ENCODE measurements at regions of chr21 and their contacts with region 1.

Region 1: DNA sequence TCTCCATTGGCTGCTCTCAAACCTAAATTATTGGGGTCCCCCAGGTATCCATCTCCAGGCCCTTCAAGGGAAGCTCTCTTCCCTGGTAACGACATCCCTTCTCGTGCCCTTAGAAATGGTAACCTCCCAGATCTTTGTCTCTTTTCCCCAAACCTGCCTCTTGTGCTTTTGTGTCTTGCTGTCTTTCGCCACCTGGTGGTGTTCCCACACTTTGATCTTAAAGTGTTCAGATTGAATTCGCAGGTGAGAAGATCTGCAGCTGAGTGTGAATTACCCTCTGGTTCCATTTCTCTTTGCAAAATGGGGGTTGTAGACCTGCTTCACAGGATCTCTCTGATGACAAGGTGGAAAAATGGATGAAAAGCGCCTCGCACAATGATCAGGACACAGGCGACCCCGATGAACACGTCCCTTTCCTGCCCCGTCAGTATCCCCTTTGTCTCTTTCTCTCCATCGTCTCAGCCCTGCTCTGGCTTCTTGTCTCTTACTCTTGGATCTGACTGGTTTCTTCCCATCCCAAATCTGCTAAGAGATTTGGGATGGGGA is 53.1 kb downstream of the DOP1B start:
- DNase-seq: peak in 7 of 9 donors; percentile 20 to 57 (median 51)
- ATAC-seq: no peak
- H3K4me3 ChIP-seq: no peak overlapping the region
- H3K4me3 Mint-ChIP-seq: no peak overlapping the region
- H3K27ac ChIP-seq: no peak overlapping the region
- H3K27ac Mint-ChIP-seq: peak overlapping the region in 2 of 9 donors; percentile 3 to 38
- H3K4me1 ChIP-seq: no peaks in the 10 kb centered on the region
- H3K4me1 Mint-ChIP-seq: peaks cover 1 to 18% (median 9%) of the 10 kb centered on the region in 7 donors
- H3K27me3 ChIP-seq: no peaks in the 10 kb centered on the region
- H3K27me3 Mint-ChIP-seq: no peaks in the 10 kb centered on the region

Region 2: DNA sequence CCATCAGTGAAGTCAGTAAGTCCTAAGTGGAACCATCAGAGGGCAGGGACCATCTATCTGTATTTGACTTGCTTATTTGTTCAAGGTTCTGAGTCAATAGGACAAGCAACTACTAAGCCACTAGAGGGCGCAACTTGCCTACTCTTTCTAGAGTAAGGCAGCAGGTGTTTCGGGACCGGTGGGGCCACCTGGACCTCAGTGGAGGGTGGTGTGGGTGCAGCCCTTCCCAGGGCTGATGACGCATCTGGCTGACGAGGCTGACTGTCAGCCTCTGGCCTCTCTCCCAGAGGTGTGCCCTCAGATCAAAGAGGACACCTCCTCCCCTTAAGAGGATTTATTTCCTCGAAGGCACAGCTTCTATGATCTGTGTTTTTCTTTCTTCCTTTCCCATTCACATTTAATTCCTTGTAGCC is 68.2 kb before region 1 on chr21:
- CTCF ChIA-PET with region 1: interaction called, 8 read pairs
- POLR2A ChIA-PET with region 1: interaction called, 3 read pairs
- intact Hi-C with region 1: loop called (anchors 1 kb)
- DNase-seq: peak; percentile 50 to 92 (median 84)
- ATAC-seq: peak; percentile 99
- H3K4me3 ChIP-seq: no peak overlapping the region
- H3K4me3 Mint-ChIP-seq: peak overlapping the region in 5 of 10 donors; percentile 1 to 15 (median 3)
- H3K27ac ChIP-seq: peak overlapping the region; percentile 74
- H3K27ac Mint-ChIP-seq: peak overlapping the region; percentile 16 to 92 (median 83)
- H3K4me1 ChIP-seq: peaks cover 18 to 19% of the 10 kb centered on the region in 2 donors
- H3K4me1 Mint-ChIP-seq: peaks cover 11 to 42% (median 39%) of the 10 kb centered on the region in 7 donors
- H3K27me3 ChIP-seq: no peaks in the 10 kb centered on the region
- H3K27me3 Mint-ChIP-seq: no peaks in the 10 kb centered on the region

Region 3: DNA sequence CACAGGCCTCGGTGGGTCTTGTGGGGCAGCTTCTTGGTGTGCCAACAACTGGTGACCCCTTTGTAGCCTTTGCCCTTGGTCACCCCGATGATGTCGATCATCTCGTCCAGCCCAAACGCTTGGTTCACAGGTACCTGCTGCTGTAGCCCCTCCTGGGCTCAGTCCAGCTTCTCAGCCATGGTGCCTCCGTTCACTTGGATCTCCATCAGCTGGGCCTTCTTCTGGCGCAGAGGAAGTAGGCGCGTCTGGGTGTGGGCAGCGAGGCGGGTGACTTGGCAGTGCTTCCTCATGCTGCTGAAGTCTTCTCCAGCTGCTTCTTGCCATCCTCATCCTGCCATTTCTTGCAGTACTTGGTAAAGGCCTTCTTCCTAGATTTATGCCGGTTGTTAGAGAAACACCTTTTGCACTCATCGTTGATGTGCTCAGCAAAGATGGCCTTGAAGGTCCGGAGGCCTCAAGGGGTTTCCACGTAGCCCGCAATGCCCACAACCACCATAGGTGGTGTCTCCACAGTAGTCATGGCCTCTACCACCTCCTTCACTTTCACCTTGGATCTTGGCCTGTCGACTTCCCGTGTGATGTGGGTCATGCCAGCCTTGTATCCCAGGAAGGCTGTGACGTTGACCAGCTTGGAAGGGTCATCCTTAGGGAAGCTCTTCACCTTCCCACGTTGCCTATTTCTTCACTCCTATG is 40.1 kb before region 1 on chr21:
- CTCF ChIA-PET with region 1: no interaction called
- POLR2A ChIA-PET with region 1: interaction called, 4 read pairs
- intact Hi-C with region 1: loop called (anchors 2 to 5 kb)
- DNase-seq: no peak
- ATAC-seq: no peak
- H3K4me3 ChIP-seq: no peak overlapping the region
- H3K4me3 Mint-ChIP-seq: no peak overlapping the region
- H3K27ac ChIP-seq: no peak overlapping the region
- H3K27ac Mint-ChIP-seq: peak overlapping the region in 1 of 9 donors; percentile 69
- H3K4me1 ChIP-seq: peaks cover 5 to 9% of the 10 kb centered on the region in 2 donors
- H3K4me1 Mint-ChIP-seq: peaks cover 0 to 15% (median 10%) of the 10 kb centered on the region in 7 donors
- H3K27me3 ChIP-seq: no peaks in the 10 kb centered on the region
- H3K27me3 Mint-ChIP-seq: no peaks in the 10 kb centered on the region

Region 4: GRCh38 chr21:36175771-36176565 is 33.7 kb before region 1 on chr21:
- CTCF ChIA-PET with region 1: no interaction called
- POLR2A ChIA-PET with region 1: interaction called, 4 read pairs
- intact Hi-C with region 1: loop called (anchors 2 to 5 kb)
- DNase-seq: peak in 5 of 9 donors; percentile 3 to 33 (median 14)
- ATAC-seq: peak; percentile 30
- H3K4me3 ChIP-seq: no peak overlapping the region
- H3K4me3 Mint-ChIP-seq: peak overlapping the region in 2 of 10 donors; percentile 12 to 16
- H3K27ac ChIP-seq: no peak overlapping the region
- H3K27ac Mint-ChIP-seq: peak overlapping the region in 8 of 9 donors; percentile 42 to 87 (median 84)
- H3K4me1 ChIP-seq: peaks cover 9 to 14% of the 10 kb centered on the region in 2 donors
- H3K4me1 Mint-ChIP-seq: peaks cover 7 to 33% (median 24%) of the 10 kb centered on the region in 7 donors
- H3K27me3 ChIP-seq: no peaks in the 10 kb centered on the region
- H3K27me3 Mint-ChIP-seq: no peaks in the 10 kb centered on the region

Region 5: GRCh38 chr21:36223451-36223850 is 13.8 kb after region 1 on chr21:
- CTCF ChIA-PET with region 1: interaction called, 11 read pairs
- POLR2A ChIA-PET with region 1: interaction called, 4 read pairs
- intact Hi-C with region 1: no loop called
- DNase-seq: no peak
- ATAC-seq: no peak
- H3K4me3 ChIP-seq: no peak overlapping the region
- H3K4me3 Mint-ChIP-seq: no peak overlapping the region
- H3K27ac ChIP-seq: no peak overlapping the region
- H3K27ac Mint-ChIP-seq: peak overlapping the region in 1 of 9 donors; percentile 30
- H3K4me1 ChIP-seq: no peaks in the 10 kb centered on the region
- H3K4me1 Mint-ChIP-seq: no peaks in the 10 kb centered on the region
- H3K27me3 ChIP-seq: no peaks in the 10 kb centered on the region
- H3K27me3 Mint-ChIP-seq: no peaks in the 10 kb centered on the region